Psoas muscle (tissue), 8 donors: ENCODE measurements at regions of chr10 and their contacts with region 1.

Region 1: DNA sequence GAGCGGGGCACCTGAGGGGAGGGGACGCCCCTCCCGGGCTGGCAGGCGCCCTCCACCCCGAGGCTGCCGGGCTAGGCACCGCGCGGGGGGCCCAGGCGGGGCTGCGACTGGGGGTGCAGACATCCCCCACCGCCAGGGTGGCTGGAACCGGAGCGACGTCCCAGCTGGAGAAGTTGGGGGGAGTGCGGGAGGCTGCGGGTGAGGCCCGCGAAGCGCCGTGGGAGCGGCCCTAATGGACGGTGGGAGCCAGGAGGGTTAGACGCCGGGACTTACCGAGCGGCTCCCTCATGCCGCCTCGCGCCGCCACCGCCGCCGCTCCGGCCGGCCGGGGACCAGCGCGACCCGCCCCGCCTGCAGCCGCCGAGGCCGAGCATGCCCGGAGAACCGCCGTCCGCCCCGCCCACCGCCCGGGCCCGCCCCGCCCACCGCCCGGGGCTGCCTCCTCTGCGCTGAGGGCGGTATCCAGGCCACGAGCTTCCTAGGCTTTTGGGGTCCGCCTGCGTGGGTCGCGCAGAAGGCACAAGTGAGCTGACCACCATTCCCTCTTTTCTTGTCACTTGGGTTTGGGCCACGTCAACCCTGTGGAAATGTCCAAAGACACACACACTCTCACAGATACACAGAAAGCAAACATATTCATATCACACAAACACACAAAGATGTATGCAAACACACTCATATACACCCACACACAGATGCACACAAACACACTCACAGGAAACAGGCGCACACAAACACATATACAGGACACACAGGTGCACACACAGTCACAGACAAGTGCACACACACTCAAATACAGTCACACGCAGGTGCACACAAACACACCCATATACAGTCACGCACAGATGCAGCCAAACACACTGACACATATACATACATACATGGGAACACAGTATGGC is at the start of gene JCAD:
- DNase-seq: peak; percentile 83 to 85
- ATAC-seq: peak; percentile 86 to 95 (median 92)
- H3K4me3 ChIP-seq: peak within 1 kb of the TSS; percentile 87
- H3K27ac ChIP-seq: peak within 1 kb of the TSS; percentile 80
- H3K4me1 ChIP-seq: no peaks in the 10 kb centered on the region
- H3K27me3 ChIP-seq: no peaks in the 10 kb centered on the region
- CTCF ChIP-seq: no peak
- total RNA-seq, gene JCAD: 10.9 to 22.5 (median 14.7) TPM

Region 2: DNA sequence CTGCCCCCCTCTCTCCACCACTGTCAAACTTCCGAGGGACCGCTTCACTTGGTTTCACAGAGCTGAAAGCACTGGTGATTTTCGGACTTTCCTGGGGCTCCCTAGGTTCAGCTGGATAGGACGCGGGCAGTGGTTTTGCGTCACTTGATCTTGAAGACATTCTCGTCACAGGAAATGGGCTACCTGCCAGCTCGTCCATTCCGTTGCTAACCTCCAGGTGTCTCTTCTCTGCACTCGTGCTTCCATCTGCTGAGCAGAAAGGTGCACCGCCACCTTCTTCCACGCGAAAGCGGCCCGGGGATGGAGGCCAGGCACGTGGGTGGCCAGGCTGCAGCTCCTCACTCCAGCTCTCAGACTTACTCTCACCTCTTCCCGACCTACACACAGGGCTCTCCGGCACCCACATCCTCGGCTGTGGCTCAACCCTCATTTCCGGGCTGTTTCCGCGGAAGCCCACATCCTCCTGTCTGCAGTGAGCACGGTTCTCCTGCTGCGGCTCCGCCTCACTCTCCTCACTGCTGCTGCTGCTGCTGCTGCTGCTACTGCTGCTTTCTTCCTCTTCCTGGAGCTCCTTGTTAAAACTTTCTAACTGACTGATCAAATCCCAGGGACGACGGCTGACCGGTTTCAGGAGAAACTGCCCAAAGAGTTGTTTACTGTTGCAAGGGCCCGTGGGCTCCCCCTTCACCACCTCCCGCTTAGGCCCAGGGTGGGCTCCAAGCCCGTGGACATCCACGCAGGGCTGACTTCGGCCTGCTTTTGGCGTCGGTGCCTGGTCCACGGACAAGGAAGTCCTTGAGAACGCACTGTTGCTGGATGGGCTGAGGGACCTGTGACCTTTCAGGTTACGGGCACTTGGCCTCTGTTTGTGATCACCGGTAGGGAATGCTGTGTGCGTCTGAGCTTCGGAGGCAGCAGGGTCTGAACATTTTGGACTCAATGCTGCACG is 32.1 kb before region 1 on chr10:
- intact Hi-C with region 1: no loop called
- DNase-seq: peak; percentile 48 to 69
- ATAC-seq: peak; percentile 33 to 52 (median 39)
- H3K4me3 ChIP-seq: no peak overlapping the region
- H3K27ac ChIP-seq: peak overlapping the region; percentile 23
- H3K4me1 ChIP-seq: peaks cover 8% of the 10 kb centered on the region
- H3K27me3 ChIP-seq: no peaks in the 10 kb centered on the region
- CTCF ChIP-seq: peak; percentile 11

Region 3: DNA sequence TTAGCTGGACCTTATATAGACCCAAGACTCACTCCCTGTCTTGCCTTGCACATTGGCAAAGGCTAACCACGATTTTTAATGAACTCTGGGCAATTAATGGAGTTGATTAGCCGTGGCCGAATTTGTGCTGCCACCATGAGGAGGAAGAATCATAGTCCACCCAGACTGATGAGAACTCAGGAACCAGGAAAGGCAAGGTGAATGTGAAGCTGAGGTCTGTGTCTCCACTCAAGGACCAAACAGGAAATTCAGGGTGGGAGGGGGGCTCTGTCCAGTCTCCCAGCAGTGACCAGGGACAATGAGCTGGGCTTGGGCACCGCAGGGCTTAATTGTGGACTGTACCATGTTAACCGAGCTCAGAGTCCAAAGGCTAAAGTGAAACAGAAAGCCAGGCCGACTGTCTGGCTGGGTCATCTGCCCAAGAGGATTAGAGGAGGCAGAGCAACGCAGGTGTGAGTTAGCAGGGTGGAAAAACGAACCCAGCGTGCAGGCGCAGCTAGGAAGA is 127.0 kb after region 1 on chr10:
- intact Hi-C with region 1: loop called in 1 of 2 experiments (anchors 5 kb)
- DNase-seq: no peak
- ATAC-seq: peak; percentile 19 to 69 (median 54)
- H3K4me3 ChIP-seq: peak overlapping the region; percentile 52
- H3K27ac ChIP-seq: peak overlapping the region; percentile 64
- H3K4me1 ChIP-seq: no peaks in the 10 kb centered on the region
- H3K27me3 ChIP-seq: peaks cover 0 to 4% (median 0%) of the 10 kb centered on the region in 3 donors
- CTCF ChIP-seq: no peak